Cardiac septum (tissue), 1 donor: ENCODE measurements at regions of chr7 and their contacts with region 1.

Region 1: DNA sequence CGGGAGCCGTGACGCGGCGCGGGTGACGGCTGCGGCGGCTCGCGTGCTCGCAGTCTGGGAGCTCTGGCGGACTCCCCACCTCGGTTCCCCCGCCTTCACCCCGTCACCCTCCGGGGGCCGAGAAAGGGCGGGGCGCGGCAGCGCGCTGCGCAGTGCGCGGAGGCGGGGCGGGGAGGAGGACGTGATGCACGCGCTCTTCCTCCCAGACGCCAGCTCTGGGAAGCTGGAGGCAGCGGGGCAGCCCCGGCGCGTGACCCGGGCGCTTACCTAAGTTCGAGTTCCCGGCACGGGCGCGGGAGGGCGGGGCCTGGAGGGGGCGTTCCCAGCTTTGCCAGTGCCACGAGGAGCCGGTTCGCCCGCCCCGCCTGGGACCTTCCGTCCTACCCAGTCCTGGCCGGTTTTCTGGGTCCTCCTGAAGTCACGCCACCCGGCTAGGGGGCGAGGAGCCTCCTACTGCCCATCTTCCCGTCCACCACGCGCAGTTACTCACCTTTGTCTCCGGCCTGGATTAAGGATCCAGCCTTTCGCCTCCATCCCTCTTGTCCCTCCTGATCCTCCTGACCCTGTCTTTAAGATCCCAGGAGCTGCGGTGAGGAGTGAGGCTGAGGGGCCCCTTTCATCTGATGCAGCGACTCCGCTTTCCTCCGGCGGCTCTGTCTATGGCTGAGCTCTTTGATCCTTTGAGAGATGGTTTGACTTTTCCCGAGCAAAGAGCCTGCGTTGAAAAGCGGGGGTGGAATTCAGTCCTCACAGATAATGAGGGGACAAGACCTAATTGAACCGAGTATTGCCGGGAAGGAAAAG is 470 bp upstream of the NAMPT start:
- DNase-seq: peak; percentile 99

Region 2: GRCh38 chr7:106064771-106065585 is 220.3 kb before region 1 on chr7:
- intact Hi-C with region 1: loop called (anchors 2 kb)
- DNase-seq: peak; percentile 90

Region 3: GRCh38 chr7:106176414-106177299 is 108.6 kb before region 1 on chr7:
- intact Hi-C with region 1: loop called (anchors 2 kb)
- DNase-seq: peak; percentile 91

Region 4: DNA sequence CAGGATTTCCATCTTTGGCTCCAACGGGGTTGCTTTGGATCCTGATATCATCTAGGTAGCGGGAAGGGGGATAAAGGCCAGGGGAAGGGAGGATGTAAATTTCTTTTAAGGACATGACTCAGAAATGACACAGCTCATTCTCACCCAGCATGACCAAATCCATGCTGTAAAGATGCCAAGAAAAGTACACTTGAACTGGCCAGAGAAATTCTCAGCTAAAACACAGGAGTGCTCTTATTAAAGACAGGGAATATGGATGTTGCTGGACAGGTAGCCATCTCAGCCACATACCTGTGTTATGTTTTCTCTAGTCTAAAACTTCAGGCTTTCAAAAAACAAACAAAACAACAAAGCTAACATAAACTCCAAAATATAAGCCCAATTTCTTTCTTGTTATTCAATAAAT is 68.7 kb before region 1 on chr7:
- intact Hi-C with region 1: loop called (anchors 1 kb)
- DNase-seq: no peak

Region 5: DNA sequence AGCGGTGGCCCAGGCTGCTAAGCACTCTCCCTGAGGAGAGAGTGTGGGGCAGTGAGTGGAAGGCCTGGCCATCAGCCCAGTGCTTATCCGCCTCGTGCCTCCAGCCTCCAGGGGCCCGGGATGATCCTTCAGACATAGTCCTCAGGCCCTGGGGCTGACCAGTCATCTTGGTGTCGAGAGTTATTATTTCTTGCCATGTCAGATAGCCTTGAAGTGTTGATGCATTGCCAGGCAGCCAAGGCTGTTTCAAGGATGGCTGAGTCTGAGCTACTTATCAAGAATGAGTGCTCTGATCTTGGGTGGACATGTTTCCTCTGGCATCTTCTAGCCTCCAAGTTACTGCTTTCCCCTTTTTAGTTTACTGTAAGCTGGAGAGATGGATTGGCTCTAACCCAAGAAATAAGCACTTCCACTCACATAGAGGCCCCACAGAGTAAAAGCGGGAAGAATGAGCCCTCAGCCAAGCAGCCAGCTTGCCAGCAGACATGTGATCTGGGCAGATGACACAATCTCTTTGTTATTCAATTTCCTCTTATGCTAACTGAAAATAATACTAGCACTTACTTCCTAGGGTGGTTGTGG is 136.0 kb after region 1 on chr7:
- intact Hi-C with region 1: loop called (anchors 2 kb)
- DNase-seq: peak; percentile 87

Region 6: GRCh38 chr7:106461993-106462859 is 177.0 kb after region 1 on chr7:
- intact Hi-C with region 1: loop called (anchors 10 kb)
- DNase-seq: no peak